Activated B cell treated with CpG ODN at 0.5 μM for 24 hours (primary cell): ENCODE measurements at regions of chr15 and their contacts with region 1.

Region 1: GRCh38 chr15:90143166-90143655 is 40.9 kb upstream of the IDH2 start:
- DNase-seq: peak; percentile 54
- ATAC-seq: peak; percentile 93
- H3K4me3 Mint-ChIP-seq: no peak overlapping the region
- H3K27ac Mint-ChIP-seq: no peak overlapping the region
- H3K4me1 Mint-ChIP-seq: peaks cover 3% of the 10 kb centered on the region
- H3K27me3 Mint-ChIP-seq: peaks cover 7% of the 10 kb centered on the region
- CTCF ChIP-seq: no peak

Region 2: GRCh38 chr15:90286678-90287077 is 143.5 kb after region 1 on chr15:
- CTCF ChIA-PET with region 1: interaction called, 3 read pairs
- POLR2A ChIA-PET with region 1: no interaction called
- intact Hi-C with region 1: loop called (anchors 1 kb)
- DNase-seq: no peak
- ATAC-seq: peak; percentile 68
- H3K4me3 Mint-ChIP-seq: no peak overlapping the region
- H3K27ac Mint-ChIP-seq: no peak overlapping the region
- H3K4me1 Mint-ChIP-seq: peaks cover 3% of the 10 kb centered on the region
- H3K27me3 Mint-ChIP-seq: no peaks in the 10 kb centered on the region
- CTCF ChIP-seq: no peak

Region 3: GRCh38 chr15:90300988-90301706 is 157.9 kb after region 1 on chr15:
- CTCF ChIA-PET with region 1: interaction called, 6 read pairs
- POLR2A ChIA-PET with region 1: interaction called, 3 read pairs
- intact Hi-C with region 1: loop called (anchors 1 kb)
- DNase-seq: peak; percentile 46
- ATAC-seq: peak; percentile 70
- H3K4me3 Mint-ChIP-seq: no peak overlapping the region
- H3K27ac Mint-ChIP-seq: no peak overlapping the region
- H3K4me1 Mint-ChIP-seq: peaks cover 5% of the 10 kb centered on the region
- H3K27me3 Mint-ChIP-seq: no peaks in the 10 kb centered on the region
- CTCF ChIP-seq: peak; percentile 44